Spleen (tissue), 13 donors: ENCODE measurements at regions of chr5 and their contacts with region 1.

Region 1: DNA sequence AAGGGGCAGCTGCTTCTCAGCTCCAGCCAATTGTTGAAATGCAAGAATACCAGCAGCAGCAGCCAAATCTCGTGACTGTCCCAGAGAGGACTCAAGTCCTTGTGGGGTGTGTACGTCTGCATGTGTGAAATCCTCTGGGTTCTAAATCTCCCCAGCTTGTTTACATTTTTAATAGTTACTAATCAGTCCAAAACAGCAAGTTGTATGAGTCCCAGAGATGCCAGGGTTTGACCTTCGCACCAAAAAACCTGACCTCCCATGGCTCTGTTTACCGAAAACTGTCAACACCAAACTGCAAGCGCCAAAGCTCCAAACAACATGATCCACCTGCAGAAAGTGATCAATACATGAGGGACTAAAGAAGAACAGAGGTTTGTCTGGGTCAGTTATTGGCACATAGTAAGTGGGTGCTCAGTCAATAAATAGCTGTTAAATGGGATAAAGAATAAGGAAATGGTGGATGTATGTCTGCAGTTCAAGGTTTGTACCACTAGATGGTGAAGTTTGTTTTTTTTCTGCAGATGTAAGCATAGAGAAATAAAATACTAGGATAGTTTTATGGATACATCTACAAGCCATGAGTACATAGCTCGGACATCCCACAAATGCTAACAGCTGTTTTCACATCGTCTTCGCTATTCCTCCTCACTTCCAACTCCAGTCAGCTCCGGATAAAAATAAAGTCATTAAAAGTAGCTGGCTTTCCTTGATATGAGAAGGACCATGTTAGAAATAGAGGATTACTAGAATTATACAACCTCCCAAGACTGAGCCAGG is 85.3 kb upstream of the ADRB2 start:
- DNase-seq: no peak
- H3K4me3 ChIP-seq: no peak overlapping the region
- H3K27ac ChIP-seq: peak overlapping the region in 4 of 8 donors; percentile 26 to 56 (median 48)
- H3K4me1 ChIP-seq: peaks cover 4 to 26% (median 13%) of the 10 kb centered on the region in 6 donors
- H3K27me3 ChIP-seq: no peaks in the 10 kb centered on the region
- CTCF ChIP-seq: peak; percentile 58 to 96 (median 82)
- POLR2A ChIP-seq: no peak

Region 2: DNA sequence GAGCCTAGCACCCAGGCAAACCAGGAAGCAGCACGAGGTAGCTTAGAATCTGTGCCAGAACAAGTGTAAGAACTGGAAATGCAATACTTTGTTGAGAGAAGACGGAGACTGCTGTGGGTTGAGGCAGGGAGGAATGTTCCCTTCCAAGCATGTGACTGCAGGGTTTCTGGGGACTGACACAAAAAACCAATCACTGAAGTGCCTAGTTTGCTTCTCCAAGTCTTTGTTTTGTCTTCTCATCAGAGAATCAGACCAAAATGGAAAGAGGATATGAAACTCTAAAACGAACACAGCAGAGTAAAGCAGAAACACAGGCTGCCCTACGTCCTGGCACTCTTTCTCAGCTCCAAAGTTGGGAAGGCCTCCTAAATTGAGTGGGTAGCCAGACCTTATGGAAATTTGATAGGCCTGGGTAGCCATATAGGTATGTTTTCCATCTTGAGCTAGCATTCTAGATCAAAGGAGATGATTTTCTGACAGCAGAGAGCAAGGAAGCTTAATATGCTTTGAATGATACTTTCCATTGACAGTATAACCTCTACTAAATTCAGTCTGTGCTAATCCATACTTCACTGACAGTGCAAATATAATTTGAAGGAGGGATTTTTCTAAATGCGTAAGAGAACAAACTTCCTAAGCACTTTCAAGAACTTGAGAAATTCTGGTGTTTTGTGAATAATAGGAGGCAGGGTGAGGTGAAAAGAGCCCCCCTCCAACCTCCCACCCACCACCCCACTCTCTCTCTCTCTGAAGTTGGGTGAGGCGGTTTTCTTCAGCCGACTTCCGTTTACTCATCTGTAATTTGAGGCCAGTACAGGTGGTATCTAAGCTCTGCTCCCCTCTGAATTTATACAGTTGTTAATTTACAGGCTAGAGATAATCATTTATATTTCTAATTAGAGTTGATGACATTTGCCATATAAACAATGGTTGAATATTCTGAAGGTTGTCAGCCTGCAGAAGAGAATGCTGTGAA is 90.7 kb after region 1 on chr5:
- intact Hi-C with region 1: loop called (anchors 10 kb)
- DNase-seq: no peak
- H3K4me3 ChIP-seq: peak overlapping the region in 6 of 8 donors; percentile 8 to 89 (median 64)
- H3K27ac ChIP-seq: peak overlapping the region; percentile 54 to 98 (median 80)
- H3K4me1 ChIP-seq: peaks cover 38 to 100% (median 93%) of the 10 kb centered on the region in 6 donors
- H3K27me3 ChIP-seq: no peaks in the 10 kb centered on the region
- CTCF ChIP-seq: no peak
- POLR2A ChIP-seq: no peak

Region 3: DNA sequence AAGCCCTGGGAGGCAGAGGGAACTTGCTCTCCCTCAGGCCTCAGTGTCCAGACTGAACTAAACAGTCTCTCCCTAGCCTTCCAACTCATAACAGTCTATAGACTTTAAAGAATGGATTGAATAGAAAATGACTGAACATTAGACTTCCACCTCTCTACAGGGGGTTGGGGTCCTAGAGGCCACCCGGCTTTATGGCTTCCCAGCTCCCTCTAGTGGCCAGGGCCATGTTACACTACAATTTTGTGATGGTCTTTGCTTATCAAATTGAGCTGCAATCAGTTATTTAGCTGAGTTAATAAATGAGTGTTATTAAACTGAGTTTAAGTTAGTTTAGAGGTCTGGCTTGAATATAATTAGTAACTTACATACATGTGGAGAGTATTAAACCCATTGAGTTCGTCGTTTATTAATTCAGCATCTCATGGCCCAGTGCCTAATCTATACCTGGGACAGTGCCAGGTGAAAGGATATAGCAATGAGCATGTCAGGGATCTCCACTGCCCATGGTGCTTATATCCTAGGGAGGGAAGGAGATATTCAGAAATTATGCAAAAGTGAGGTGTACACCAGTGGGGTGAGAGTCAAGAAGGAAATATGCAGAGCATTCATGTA is 216.5 kb after region 1 on chr5:
- intact Hi-C with region 1: loop called (anchors 10 kb)
- DNase-seq: peak; percentile 79
- H3K4me3 ChIP-seq: no peak overlapping the region
- H3K27ac ChIP-seq: no peak overlapping the region
- H3K4me1 ChIP-seq: peaks cover 0 to 26% (median 8%) of the 10 kb centered on the region in 6 donors
- H3K27me3 ChIP-seq: no peaks in the 10 kb centered on the region
- CTCF ChIP-seq: peak in 10 of 11 experiments; percentile 55 to 80 (median 76)
- POLR2A ChIP-seq: no peak

Region 4: DNA sequence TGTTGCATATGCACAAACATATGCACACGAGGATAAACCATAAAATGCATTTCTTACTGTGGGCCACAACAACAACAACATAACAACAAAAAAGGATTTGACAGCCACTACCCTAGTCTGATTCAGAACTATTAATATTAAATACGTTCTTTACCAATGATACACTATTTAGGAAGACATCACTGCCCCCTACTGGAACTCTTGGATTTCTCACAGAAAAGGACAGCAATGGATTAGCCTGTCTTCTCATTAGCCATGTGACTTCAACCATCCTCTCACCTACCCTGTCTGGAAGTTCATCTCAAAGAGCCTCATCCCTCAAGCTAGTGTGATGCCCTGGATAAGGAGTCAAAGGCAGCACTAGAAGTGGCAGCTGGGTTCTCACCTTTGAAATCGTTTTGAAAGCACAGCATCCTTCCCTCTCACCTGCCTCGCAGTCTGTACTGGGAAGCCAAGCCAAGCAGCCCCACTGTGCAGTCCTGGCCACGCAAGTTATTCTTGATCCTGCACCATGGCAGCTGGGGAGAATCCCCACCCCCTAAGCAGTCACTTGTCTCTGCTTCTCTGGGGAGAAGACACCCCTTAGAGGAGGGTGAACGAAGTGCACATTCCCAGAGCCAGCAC is 257.1 kb after region 1 on chr5:
- intact Hi-C with region 1: loop called (anchors 5 kb)
- DNase-seq: no peak
- H3K4me3 ChIP-seq: no peak overlapping the region
- H3K27ac ChIP-seq: no peak overlapping the region
- H3K4me1 ChIP-seq: peaks cover 0 to 6% (median 0%) of the 10 kb centered on the region in 6 donors
- H3K27me3 ChIP-seq: no peaks in the 10 kb centered on the region
- CTCF ChIP-seq: peak; percentile 45 to 86 (median 72)
- POLR2A ChIP-seq: no peak

Region 5: DNA sequence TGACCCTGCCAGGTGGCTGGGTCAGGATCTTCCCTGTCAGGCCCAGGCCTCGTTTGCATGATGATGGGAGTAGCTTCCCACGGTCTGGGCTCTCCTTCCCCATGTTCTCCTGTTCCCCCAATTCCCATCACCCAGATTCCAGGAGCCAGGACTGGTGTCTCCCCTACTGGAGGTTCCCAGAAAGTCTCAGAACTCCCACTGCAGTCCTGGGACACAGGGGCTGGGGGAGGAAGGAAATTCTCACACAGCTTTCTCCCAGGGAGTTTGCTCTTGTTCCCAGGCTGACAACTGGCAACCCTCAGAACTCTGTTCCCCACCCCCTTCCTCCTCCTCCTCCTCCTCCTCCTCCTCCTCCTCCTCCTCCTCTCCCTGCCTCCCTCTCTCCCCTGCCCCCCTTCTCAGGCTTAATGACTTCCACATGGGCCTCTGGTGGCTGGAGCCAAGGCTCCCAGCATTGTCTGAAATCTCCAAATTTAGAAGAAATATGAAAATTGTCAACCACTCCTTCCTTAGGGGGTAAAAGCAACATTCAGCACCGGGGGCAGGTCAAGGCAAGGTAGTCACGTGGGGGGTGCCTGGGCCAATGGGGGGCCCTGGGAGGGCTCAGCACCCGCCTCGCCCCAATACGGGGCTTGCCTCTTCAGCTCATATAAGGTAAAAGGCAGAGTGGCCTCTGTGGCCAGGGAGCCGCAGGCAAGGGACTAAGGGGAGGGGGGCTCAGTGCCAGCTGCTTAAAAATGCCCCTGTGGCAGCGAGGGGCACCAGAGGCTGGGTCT is 665.2 kb after region 1 on chr5:
- intact Hi-C with region 1: no loop called
- DNase-seq: no peak
- H3K4me3 ChIP-seq: peak overlapping the region in 7 of 8 donors; percentile 34 to 58 (median 40)
- H3K27ac ChIP-seq: peak overlapping the region in 7 of 8 donors; percentile 71 to 82 (median 77)
- H3K4me1 ChIP-seq: peaks cover 0 to 17% (median 0%) of the 10 kb centered on the region in 6 donors
- H3K27me3 ChIP-seq: no peaks in the 10 kb centered on the region
- CTCF ChIP-seq: no peak
- POLR2A ChIP-seq: peak in 2 of 3 donors; percentile 51 to 54